Activated CD4-positive, alpha-beta memory T cell treated with anti-CD3 and anti-CD28 coated beads for 36 hours (primary cell): ENCODE measurements at regions of chr12 and their contacts with region 1.

Region 1: DNA sequence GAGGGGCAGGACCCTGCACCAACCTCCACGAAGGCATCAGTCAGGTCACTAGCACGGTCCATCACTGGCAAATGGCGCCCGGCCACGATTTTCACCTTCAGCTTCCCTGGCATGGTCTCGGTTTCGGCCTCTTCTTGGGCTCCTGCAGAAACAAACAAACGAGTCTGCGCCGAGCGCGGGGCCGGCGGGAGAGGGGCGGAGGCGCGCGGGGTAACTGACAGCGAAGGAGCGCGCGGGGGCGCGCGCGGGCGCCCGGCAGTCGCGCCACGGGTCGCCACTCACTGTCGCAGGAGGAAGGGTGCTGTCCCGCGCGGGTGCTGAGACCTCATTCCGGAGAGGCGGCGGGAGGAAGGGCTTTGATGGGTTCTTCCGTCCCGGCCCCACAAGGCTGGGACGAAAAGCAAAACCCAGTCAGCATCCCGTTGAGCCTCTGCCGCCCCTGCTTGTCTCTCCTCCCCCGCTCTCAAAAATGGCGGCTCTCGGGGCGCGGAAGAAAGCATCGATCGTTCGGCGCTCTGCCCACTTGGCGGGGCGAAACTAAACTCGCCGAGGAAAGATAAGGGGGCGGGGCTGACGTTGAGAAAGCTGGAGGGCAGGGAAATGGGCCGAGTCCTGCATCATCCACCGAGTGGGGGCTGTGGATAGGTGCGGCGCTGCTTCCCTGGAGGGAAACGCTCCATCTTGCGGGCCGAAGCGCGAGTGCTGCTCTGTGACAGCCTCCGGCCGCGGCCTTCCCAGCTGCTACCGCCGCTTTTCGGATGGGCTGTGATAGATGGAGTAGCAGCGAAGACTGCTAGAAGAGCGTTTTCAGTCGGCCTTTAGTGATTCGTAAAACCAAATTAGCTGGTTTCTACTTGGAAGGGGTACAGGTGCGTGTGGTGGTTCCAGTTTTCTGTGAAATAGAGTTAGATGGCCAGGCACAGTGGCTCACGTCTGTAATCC is at the start of gene C2CD5:
- DNase-seq: peak; percentile 97
- H3K4me3 Mint-ChIP-seq: peak within 1 kb of the TSS; percentile 95
- H3K27ac Mint-ChIP-seq: peak within 1 kb of the TSS; percentile 93
- H3K4me1 Mint-ChIP-seq: peaks cover 31% of the 10 kb centered on the region
- H3K27me3 Mint-ChIP-seq: no peaks in the 10 kb centered on the region
- total RNA-seq, gene C2CD5: 32.6 to 32.8 TPM

Region 2: DNA sequence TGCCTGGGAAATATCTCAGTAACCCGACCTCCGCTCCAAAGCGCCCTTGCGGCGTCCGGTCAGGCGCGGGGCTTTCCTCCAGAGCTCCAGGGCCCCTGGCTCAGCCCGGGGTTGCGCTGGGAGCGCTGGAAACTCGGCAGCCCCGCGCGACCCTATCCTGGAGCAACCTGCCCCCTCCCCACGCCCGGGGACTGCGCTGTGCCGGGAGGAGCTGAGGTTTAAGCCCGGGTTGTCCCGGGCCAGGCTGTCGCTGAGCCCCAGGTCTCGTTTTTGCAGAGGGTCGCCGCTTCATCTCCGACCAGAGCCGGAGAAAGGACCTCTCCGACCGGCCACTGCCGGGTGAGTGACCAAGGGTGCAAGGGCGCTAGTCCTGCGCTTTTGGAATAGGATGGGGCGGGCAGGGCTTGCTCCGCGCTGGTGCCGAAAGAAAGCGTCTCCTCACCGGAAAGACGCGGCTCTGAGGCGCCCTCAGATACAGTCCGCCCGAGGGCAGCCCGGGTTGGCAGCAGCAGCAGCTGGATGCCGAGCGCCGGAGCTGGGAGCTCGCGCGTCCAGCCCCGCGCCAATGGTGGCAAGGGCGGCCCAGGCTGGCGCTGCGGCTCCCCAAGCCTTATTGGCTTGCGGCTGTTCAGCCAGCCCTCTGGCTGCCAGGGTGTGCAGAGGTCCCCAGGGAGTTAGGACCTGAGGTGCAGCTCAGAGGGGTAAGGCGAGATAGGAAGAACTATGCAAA is 1016.7 kb before region 1 on chr12:
- CTCF ChIA-PET with region 1: no interaction called
- POLR2A ChIA-PET with region 1: no interaction called
- intact Hi-C with region 1: no loop called
- DNase-seq: peak; percentile 78
- H3K4me3 Mint-ChIP-seq: peak overlapping the region; percentile 73
- H3K27ac Mint-ChIP-seq: no peak overlapping the region
- H3K4me1 Mint-ChIP-seq: peaks cover 6% of the 10 kb centered on the region
- H3K27me3 Mint-ChIP-seq: peaks cover 27% of the 10 kb centered on the region

Region 3: GRCh38 chr12:21657326-21658077 is 886.8 kb before region 1 on chr12 and contains the start of gene LDHB:
- CTCF ChIA-PET with region 1: no interaction called
- POLR2A ChIA-PET with region 1: no interaction called
- intact Hi-C with region 1: loop called (anchors 10 kb)
- DNase-seq: peak; percentile 98
- H3K4me3 Mint-ChIP-seq: peak within 1 kb of the TSS; percentile 98
- H3K27ac Mint-ChIP-seq: peak within 1 kb of the TSS; percentile 95
- H3K4me1 Mint-ChIP-seq: peaks cover 60% of the 10 kb centered on the region
- H3K27me3 Mint-ChIP-seq: no peaks in the 10 kb centered on the region
- total RNA-seq, gene LDHB: 1,684 to 1,884 TPM

Region 4: DNA sequence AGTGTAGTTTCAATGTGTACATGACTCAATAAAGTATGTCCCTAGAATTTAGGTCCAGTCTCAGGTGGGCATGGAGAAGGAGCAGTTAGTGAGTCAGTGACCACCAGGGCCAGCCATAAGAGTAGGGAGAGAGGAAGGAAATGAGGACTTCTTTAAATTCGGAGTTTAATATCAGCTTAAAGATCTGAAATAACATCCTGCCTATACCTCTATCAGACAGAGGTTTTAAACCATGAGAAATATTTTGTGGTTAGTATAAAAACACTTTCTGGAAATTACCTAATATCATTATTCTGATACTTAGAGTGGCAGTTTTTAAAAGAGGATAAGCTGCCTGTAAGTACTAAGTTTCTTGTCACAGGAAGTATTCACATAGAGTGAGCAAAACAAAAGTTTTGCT is 148.1 kb before region 1 on chr12:
- CTCF ChIA-PET with region 1: no interaction called
- POLR2A ChIA-PET with region 1: no interaction called
- intact Hi-C with region 1: loop called (anchors 5 kb)
- DNase-seq: peak; percentile 37
- H3K4me3 Mint-ChIP-seq: peak overlapping the region; percentile 61
- H3K27ac Mint-ChIP-seq: peak overlapping the region; percentile 75
- H3K4me1 Mint-ChIP-seq: peaks cover 43% of the 10 kb centered on the region
- H3K27me3 Mint-ChIP-seq: no peaks in the 10 kb centered on the region

Region 5: DNA sequence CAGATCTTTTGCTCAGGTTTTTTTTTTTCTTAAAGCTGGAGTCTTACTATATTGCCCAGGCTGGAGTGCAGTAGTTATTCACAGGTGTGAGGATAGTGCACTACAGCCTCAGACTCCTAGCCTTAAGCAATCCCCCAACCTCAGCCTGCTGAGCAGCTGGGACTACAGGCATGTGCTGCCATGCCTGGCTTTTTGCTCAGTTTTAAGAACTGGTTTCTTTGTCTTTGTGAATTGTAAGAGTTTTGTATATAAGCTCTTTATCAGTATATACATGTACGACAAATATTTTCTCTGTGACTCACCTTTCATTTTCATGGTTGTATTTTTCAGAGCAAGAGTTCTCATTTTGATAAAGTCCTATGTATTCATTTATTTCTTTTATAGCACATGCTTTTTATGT is 33.4 kb after region 1 on chr12:
- CTCF ChIA-PET with region 1: no interaction called
- POLR2A ChIA-PET with region 1: no interaction called
- intact Hi-C with region 1: no loop called
- DNase-seq: no peak
- H3K4me3 Mint-ChIP-seq: no peak overlapping the region
- H3K27ac Mint-ChIP-seq: no peak overlapping the region
- H3K4me1 Mint-ChIP-seq: no peaks in the 10 kb centered on the region
- H3K27me3 Mint-ChIP-seq: no peaks in the 10 kb centered on the region

Region 6: DNA sequence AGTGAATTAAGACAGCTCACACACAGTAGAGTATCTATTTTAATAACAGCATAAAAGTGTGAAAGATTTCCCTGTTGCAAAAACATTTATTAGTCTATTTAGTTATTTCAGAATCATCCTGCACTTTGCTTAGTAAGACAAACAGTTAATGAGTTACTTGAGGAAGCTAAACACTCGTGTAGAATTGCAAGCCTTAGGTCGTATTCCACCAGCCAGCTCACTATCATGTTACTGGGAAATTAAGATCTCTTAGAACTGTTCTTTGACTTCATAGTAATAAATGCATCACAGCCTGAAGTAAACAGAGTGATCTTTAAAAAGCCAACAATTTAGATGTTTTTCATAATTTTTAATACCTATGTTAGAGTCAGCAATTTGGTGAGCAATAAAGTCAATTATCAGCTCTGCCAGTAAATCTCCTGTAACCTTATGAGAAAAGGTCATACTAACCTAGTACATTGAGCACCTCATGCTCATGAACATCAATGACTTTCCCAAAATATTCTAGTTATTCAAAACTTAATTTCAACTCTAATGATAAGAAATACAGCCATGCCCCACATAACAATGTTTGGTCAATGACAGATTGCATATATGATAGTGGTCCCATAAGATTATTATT is 53.9 kb after region 1 on chr12:
- CTCF ChIA-PET with region 1: interaction called, 3 read pairs
- POLR2A ChIA-PET with region 1: interaction called, 7 read pairs
- intact Hi-C with region 1: loop called (anchors 1 kb)
- DNase-seq: no peak
- H3K4me3 Mint-ChIP-seq: no peak overlapping the region
- H3K27ac Mint-ChIP-seq: no peak overlapping the region
- H3K4me1 Mint-ChIP-seq: peaks cover 18% of the 10 kb centered on the region
- H3K27me3 Mint-ChIP-seq: no peaks in the 10 kb centered on the region

Region 7: DNA sequence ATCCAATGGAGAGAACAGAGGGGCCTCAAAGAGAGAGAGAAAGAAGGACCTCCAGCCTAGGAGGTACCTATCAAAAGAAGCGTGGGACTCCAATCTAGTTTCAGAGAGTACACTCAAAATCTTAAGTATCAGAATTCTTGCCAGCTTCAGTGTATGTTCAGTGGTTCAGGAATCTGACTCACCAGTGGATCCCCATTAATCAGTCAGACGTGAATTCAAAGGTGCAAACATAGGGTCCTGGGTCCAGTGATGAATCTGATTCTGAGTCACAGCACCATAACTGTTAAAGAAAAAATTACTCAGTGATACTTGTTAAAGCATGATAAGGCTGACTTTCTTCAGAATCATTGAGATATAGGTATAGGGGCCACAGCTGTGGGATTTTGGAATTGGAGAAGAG is 113.9 kb after region 1 on chr12:
- CTCF ChIA-PET with region 1: no interaction called
- POLR2A ChIA-PET with region 1: no interaction called
- intact Hi-C with region 1: loop called (anchors 1 kb)
- DNase-seq: peak; percentile 44
- H3K4me3 Mint-ChIP-seq: peak overlapping the region; percentile 27
- H3K27ac Mint-ChIP-seq: peak overlapping the region; percentile 65
- H3K4me1 Mint-ChIP-seq: peaks cover 32% of the 10 kb centered on the region
- H3K27me3 Mint-ChIP-seq: no peaks in the 10 kb centered on the region

Region 8: DNA sequence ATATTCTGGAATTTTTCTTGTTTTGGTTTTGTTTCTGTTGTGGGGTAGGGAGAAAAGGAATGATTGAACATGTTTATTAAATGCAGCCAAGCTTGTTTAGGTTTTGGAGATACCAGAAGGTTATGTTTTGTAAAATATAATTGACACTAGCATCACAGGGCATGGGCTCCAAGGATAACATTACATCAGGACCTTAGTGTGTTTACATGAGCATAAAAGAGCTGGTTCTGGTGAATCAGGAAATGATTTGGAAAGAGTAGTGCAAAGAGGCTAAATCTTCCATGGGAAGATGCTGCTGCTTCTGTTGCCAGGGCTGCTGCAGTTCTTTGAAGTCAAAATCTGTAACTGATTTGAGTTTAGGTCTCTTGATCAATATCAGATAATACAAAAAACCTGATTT is 199.4 kb after region 1 on chr12:
- CTCF ChIA-PET with region 1: no interaction called
- POLR2A ChIA-PET with region 1: no interaction called
- intact Hi-C with region 1: no loop called
- DNase-seq: no peak
- H3K4me3 Mint-ChIP-seq: no peak overlapping the region
- H3K27ac Mint-ChIP-seq: no peak overlapping the region
- H3K4me1 Mint-ChIP-seq: no peaks in the 10 kb centered on the region
- H3K27me3 Mint-ChIP-seq: peaks cover 5% of the 10 kb centered on the region